Activated CD4-positive, alpha-beta T cell treated with anti-CD3 and anti-CD28 coated beads for 36 hours (primary cell): ENCODE measurements at regions of chr3 and their contacts with region 1.

Region 1: DNA sequence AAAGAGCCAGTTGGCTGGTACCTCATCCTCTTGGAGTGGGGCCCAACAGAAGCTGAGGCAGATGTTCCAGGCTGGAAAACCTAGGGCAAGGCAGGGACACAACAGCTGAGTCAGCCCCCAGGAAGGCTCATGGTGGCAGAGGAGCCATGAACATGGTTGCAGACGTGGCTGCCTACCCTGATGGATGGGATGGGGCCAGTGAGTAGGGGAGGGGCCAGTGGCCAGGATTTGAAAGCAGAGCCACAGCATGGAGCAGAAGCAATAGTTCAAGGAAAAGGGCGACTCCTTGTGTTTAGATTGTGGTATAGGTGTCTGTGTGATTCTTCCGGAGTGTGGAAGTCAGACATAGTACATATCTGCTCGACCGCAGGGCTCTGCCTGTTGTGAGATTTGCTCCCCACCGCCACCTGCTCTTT is 24.2 kb downstream of the PXYLP1 start:
- DNase-seq: peak; percentile 72
- ATAC-seq: peak; percentile 92
- H3K4me3 Mint-ChIP-seq: no peak overlapping the region
- H3K27ac Mint-ChIP-seq: peak overlapping the region; percentile 38
- H3K4me1 Mint-ChIP-seq: peaks cover 52% of the 10 kb centered on the region
- H3K27me3 Mint-ChIP-seq: no peaks in the 10 kb centered on the region

Region 2: DNA sequence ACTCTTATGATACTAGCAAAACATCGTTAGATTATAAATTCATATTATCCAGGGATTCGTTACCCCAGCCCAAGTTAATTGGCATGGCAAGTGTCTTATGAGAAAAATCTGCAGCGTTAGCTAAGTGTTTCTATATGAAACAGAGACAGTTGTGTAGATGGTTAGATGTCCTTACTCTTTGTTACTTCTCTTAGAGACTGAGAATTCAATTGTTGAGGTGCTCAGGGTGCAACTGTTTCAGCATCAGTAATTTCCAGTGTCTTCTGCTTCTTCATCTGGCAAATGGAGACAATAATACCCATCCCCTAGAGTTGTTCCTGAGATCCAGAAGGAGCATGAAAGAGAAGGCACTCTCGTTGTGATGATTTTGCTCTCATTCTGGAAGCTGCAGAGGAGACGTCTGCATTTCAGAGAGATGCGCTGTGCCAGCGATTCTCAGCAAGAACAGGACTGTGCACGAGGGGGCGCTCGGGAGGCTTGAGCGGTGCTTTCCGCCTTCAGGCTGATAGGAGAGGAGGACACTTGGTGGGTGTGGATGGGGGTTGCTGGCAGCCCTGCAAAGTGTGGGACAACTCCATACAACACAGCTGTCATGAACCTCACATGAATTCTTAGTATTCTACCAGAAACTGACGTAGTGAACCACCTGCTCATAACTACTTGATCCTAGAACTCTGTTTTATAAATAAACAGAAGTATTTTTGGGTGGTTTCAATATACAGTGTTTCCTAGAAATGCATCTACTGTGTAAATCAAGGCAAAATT is 244.4 kb before region 1 on chr3:
- CTCF ChIA-PET with region 1: no interaction called
- POLR2A ChIA-PET with region 1: no interaction called
- intact Hi-C with region 1: loop called in 1 of 2 experiments (anchors 5 kb)
- DNase-seq: peak; percentile 93
- ATAC-seq: peak; percentile 98
- H3K4me3 Mint-ChIP-seq: no peak overlapping the region
- H3K27ac Mint-ChIP-seq: no peak overlapping the region
- H3K4me1 Mint-ChIP-seq: peaks cover 3% of the 10 kb centered on the region
- H3K27me3 Mint-ChIP-seq: peaks cover 12% of the 10 kb centered on the region

Region 3: DNA sequence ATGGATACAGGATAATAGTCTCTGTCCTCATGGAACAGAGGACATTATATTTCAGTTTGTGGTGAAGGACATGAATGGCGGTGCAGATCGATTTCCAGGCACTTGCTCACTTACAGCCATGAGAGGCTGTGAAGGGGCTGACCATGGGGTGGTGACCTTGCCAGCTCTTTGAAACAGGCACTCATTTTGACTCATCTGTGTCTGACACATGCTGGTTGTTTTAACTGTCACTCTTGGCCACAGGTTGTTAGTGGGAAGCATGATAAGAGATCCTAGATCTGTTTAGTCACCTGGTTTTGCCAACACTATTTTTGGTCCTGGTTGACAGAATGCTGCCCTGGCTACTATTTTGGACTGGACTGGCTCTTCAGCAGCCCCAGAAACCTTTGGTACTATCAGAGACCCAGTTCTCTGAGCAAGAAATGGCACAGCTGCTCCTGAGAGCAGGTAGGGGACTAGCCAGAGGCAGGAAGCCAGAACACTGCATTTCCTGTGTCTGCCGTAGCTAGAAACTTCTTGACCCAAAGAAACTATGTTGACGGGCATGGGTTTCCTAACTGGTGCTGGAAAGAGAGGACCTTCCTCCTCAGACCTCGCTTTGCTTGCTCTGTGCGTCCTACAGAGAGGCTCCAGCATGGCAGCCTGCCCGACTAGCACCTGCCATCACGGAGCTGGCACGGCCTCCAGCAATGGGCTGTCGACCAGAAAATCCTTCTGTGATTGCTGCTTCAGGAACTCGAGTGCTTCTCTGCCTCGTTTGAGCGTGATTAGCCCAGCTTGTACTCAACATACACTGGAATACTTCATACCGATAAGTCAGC is 17.9 kb before region 1 on chr3:
- CTCF ChIA-PET with region 1: interaction called, 42 read pairs
- POLR2A ChIA-PET with region 1: no interaction called
- intact Hi-C with region 1: no loop called
- DNase-seq: peak; percentile 61
- ATAC-seq: peak; percentile 92
- H3K4me3 Mint-ChIP-seq: peak overlapping the region; percentile 36
- H3K27ac Mint-ChIP-seq: peak overlapping the region; percentile 88
- H3K4me1 Mint-ChIP-seq: peaks cover 83% of the 10 kb centered on the region
- H3K27me3 Mint-ChIP-seq: no peaks in the 10 kb centered on the region

Region 4: GRCh38 chr3:141243271-141243707 is 12.6 kb before region 1 on chr3:
- CTCF ChIA-PET with region 1: interaction called, 29 read pairs
- POLR2A ChIA-PET with region 1: no interaction called
- intact Hi-C with region 1: no loop called
- DNase-seq: peak; percentile 82
- ATAC-seq: peak; percentile 98
- H3K4me3 Mint-ChIP-seq: peak overlapping the region; percentile 7
- H3K27ac Mint-ChIP-seq: peak overlapping the region; percentile 49
- H3K4me1 Mint-ChIP-seq: peaks cover 43% of the 10 kb centered on the region
- H3K27me3 Mint-ChIP-seq: no peaks in the 10 kb centered on the region

Region 5: GRCh38 chr3:141266797-141267555 is 11.1 kb after region 1 on chr3:
- CTCF ChIA-PET with region 1: interaction called, 21 read pairs
- POLR2A ChIA-PET with region 1: no interaction called
- intact Hi-C with region 1: loop called in 1 of 2 experiments (anchors 1 kb)
- DNase-seq: peak; percentile 58
- ATAC-seq: peak; percentile 80
- H3K4me3 Mint-ChIP-seq: peak overlapping the region; percentile 72
- H3K27ac Mint-ChIP-seq: peak overlapping the region; percentile 92
- H3K4me1 Mint-ChIP-seq: peaks cover 33% of the 10 kb centered on the region
- H3K27me3 Mint-ChIP-seq: no peaks in the 10 kb centered on the region

Region 6: DNA sequence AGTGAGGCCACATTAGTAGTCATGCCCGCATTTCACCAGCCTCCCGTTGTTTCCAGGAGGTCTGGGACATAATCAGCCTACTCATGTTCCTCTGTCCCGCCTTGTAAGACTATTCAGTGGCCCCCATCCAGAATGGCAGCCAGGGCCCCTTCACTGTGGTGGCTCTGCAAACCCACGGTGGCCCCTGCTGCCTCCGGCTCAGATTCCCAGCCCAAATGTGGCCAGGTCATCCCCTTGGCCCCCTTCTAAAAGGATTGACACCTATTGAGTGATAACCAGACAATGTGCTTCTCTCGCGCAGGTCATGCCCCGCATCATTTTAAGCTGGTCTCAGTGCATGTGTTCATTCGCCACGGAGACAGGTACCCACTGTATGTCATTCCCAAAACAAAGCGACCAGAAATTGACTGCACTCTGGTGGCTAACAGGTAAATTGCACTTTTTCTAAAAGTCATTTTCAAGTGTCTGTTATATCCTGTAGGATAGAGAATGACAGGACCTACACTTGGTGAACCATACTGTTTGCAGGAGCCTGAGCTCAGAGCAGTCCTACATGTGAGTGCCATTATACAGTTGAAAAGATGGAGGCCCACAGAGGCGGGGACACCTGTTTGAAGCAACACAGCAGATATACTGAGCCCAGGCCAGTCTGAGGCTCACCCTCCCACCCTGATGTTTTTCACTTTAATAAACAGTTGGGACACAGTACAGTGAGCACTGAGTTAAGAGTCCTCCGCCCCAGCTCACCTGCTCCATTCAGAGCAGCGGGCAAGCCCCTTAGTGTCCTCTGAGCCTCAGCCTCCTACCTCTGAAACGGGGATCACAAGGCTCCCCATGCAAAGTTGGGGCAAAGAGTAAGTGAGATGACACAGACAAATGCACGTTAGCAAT is 23.5 kb after region 1 on chr3:
- CTCF ChIA-PET with region 1: interaction called, 4 read pairs
- POLR2A ChIA-PET with region 1: no interaction called
- intact Hi-C with region 1: loop called in 1 of 2 experiments (anchors 2 kb)
- DNase-seq: peak; percentile 32
- ATAC-seq: peak; percentile 56
- H3K4me3 Mint-ChIP-seq: no peak overlapping the region
- H3K27ac Mint-ChIP-seq: peak overlapping the region; percentile 59
- H3K4me1 Mint-ChIP-seq: peaks cover 17% of the 10 kb centered on the region
- H3K27me3 Mint-ChIP-seq: no peaks in the 10 kb centered on the region